Endothelial cell of umbilical vein (primary cell): ENCODE measurements at regions of chr1 and their contacts with region 1.

Region 1: GRCh38 chr1:45686317-45687013 is at the start of gene GPBP1L1:
- DNase-seq: peak; percentile 97
- H3K4me3 ChIP-seq: peak within 1 kb of the TSS; percentile 62 to 99 (median 93)
- H3K27ac ChIP-seq: peak within 1 kb of the TSS; percentile 80
- H3K4me1 ChIP-seq: peaks cover 22% of the 10 kb centered on the region
- H3K27me3 ChIP-seq: no peaks in the 10 kb centered on the region
- CTCF ChIP-seq: no peak
- POLR2A ChIP-seq: peak; percentile 90
- total RNA-seq, gene GPBP1L1: 88.8 and 89.7 TPM in 2 replicates

Region 2: DNA sequence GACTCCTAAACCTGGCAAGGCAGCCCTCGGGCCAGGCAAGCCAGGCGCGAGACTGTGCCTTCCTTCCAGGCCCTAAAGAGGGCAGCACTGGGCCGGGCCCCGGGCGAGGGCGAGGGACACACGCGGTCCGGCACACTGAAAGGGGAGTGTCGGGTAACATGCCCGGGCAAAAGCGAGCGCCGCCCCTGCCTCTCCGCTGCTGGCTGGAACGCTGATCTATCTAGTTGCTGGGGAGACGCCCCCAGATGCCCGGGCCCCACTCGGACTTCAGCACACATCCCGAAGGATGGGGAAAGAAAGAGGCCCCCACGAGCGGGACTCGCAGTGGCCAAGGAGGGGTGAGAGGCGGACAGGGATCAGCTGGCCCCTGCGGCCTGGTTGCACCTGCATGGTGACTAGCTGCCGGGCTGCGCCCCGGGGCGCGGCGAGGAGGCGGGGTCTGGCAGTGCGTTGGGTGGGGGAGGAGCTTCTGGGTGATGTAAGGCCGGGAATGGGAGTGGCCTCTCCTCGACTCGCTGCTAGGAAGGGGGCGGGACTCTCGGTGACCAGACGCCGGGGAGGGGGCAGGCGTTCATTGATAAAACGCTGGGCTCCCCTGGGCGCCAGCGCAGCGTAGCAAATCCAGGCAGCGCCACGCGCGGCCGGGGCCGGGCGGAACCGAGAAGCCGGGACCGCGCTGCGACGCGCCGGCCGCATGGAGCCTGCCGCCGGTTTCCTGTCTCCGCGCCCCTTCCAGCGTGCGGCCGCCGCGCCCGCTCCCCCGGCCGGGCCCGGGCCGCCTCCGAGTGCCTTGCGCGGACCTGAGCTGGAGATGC is 886.5 kb before region 1 on chr1 and contains the start of gene PLK3:
- CTCF ChIA-PET with region 1: no interaction called
- POLR2A ChIA-PET with region 1: no interaction called
- dilution Hi-C with region 1: no loop called
- intact Hi-C with region 1: loop called (anchors 10 kb)
- DNase-seq: peak; percentile 98
- H3K4me3 ChIP-seq: peak within 1 kb of the TSS; percentile 68 to 75 (median 69)
- H3K27ac ChIP-seq: peak within 1 kb of the TSS; percentile 87
- H3K4me1 ChIP-seq: peaks cover 22% of the 10 kb centered on the region
- H3K27me3 ChIP-seq: no peaks in the 10 kb centered on the region
- CTCF ChIP-seq: peak; percentile 93 to 96
- POLR2A ChIP-seq: peak; percentile 100
- total RNA-seq, gene PLK3: 55.0 and 60.0 TPM in 2 replicates

Region 3: DNA sequence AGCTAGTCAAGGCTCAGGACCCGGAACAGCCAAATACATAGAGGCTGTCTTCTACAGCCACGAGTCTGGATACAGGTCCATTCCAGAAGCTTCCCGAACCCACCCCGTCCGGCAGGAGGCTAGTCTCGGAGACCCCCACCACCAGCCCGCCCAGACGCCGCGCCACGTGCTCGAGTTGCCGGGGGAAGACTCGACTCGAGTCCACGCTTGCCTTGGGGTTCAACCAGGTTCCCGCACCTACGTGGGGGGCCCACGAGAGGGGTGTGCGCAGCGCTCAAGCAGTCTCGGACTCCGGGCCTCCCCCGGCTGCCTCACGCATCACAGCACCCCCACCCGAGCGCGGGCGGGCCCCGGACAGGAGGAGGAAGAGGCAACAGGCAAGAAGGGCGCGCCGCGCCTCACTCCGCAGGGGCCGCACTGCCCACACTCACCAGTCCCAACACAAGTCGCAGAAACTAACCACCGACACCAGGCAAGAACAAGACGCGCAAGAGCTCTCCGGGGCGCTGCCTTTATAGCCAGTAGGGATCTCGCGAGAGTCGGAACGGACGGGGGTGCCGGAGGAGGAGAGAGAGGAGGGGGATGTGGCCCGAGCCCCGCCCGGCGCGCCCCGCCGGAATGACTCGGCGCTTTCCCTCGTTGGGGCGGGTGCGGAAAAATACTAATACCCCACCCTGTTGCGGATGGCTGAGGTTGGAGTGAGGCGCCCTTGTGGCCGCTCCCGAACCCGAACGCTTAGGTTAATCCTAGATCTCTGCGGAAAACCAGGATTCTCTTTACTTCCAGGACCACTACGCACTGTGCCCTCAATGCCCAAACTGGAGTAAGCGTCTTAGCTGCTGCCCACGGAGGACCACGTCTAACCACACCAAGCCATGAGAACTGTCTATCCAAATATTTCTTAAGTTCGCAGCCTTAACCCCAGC is 164.8 kb before region 1 on chr1 and contains the start of gene PRDX1:
- CTCF ChIA-PET with region 1: no interaction called
- POLR2A ChIA-PET with region 1: interaction called, 9 read pairs
- dilution Hi-C with region 1: no loop called
- intact Hi-C with region 1: loop called (anchors 1 kb)
- DNase-seq: peak; percentile 96
- H3K4me3 ChIP-seq: peak within 1 kb of the TSS; percentile 79 to 86 (median 80)
- H3K27ac ChIP-seq: peak within 1 kb of the TSS; percentile 87
- H3K4me1 ChIP-seq: peaks cover 19% of the 10 kb centered on the region
- H3K27me3 ChIP-seq: no peaks in the 10 kb centered on the region
- CTCF ChIP-seq: no peak
- POLR2A ChIP-seq: peak; percentile 100
- total RNA-seq, gene PRDX1: 681 and 685 TPM in 2 replicates

Region 4: DNA sequence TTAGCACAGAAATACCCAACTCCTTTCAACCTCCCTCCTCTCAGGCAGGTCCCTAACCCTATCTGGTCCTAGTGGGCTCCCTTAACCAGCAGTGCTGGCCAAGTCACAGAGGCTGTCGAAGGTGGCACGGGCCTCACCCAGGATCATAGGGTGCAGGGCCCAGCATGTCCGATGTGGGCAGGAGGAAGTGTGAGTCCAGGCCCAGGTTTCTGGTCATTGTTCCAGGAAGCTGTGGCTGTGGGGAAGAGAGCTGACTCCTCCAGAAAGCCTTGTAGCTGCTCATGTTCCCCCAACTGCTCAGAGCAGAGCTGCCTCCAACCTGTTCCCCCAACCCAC is 65.0 kb before region 1 on chr1:
- CTCF ChIA-PET with region 1: no interaction called
- POLR2A ChIA-PET with region 1: no interaction called
- dilution Hi-C with region 1: no loop called
- intact Hi-C with region 1: loop called (anchors 5 kb)
- DNase-seq: peak; percentile 33
- H3K4me3 ChIP-seq: no peak overlapping the region
- H3K27ac ChIP-seq: no peak overlapping the region
- H3K4me1 ChIP-seq: peaks cover 54% of the 10 kb centered on the region
- H3K27me3 ChIP-seq: no peaks in the 10 kb centered on the region
- CTCF ChIP-seq: no peak
- POLR2A ChIP-seq: no peak

Region 5: GRCh38 chr1:45803301-45803780 is 116.9 kb after region 1 on chr1 and contains the start of gene MAST2:
- CTCF ChIA-PET with region 1: interaction called, 4 read pairs
- POLR2A ChIA-PET with region 1: interaction called, 3 read pairs
- dilution Hi-C with region 1: no loop called
- intact Hi-C with region 1: loop called (anchors 1 kb)
- DNase-seq: peak; percentile 88
- H3K4me3 ChIP-seq: peak within 1 kb of the TSS; percentile 78 to 98 (median 82)
- H3K27ac ChIP-seq: peak within 1 kb of the TSS; percentile 93
- H3K4me1 ChIP-seq: peaks cover 24% of the 10 kb centered on the region
- H3K27me3 ChIP-seq: no peaks in the 10 kb centered on the region
- CTCF ChIP-seq: no peak
- POLR2A ChIP-seq: peak; percentile 50
- total RNA-seq, gene MAST2: 33.8 and 41.2 TPM in 2 replicates

Region 6: DNA sequence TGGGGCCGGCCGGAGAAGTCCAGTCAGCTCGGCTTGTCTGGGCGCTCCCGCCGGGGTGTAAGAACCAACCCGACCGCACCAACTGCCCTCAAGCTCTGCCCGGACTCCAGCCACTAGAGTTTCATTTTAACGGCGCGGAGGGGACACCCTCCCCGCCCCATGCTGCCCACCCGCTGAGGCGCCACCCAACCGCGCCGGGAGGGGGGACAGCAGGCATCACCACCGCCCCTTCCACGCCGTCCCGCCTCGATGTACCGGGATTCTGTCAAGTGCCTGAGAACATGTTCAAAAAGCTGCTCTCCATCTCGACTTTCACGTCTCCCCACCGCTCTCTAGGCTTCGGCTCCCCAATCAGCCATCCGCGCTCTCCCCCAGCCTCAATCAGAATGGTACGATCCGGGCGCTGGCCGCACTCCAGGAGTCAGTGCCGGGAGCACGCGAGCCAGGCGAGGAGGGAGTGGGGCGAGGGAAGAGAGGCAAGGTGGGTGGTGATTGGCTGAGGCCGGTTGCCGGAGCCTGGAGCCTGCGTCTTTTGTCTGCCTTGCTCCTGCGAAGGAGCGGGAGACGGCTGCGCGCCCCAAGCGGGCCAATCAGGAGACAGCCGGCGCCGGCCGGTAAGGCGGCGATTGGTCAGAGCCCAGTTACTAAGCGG is 446.2 kb after region 1 on chr1 and contains the start of gene PIK3R3:
- CTCF ChIA-PET with region 1: no interaction called
- POLR2A ChIA-PET with region 1: no interaction called
- dilution Hi-C with region 1: no loop called
- intact Hi-C with region 1: loop called (anchors 5 kb)
- DNase-seq: peak; percentile 99
- H3K4me3 ChIP-seq: peak within 1 kb of the TSS; percentile 79 to 99 (median 92)
- H3K27ac ChIP-seq: peak within 1 kb of the TSS; percentile 86
- H3K4me1 ChIP-seq: peaks cover 24% of the 10 kb centered on the region
- H3K27me3 ChIP-seq: no peaks in the 10 kb centered on the region
- CTCF ChIP-seq: no peak
- POLR2A ChIP-seq: peak; percentile 99
- total RNA-seq, gene PIK3R3: 14.3 and 14.6 TPM in 2 replicates

Region 7: DNA sequence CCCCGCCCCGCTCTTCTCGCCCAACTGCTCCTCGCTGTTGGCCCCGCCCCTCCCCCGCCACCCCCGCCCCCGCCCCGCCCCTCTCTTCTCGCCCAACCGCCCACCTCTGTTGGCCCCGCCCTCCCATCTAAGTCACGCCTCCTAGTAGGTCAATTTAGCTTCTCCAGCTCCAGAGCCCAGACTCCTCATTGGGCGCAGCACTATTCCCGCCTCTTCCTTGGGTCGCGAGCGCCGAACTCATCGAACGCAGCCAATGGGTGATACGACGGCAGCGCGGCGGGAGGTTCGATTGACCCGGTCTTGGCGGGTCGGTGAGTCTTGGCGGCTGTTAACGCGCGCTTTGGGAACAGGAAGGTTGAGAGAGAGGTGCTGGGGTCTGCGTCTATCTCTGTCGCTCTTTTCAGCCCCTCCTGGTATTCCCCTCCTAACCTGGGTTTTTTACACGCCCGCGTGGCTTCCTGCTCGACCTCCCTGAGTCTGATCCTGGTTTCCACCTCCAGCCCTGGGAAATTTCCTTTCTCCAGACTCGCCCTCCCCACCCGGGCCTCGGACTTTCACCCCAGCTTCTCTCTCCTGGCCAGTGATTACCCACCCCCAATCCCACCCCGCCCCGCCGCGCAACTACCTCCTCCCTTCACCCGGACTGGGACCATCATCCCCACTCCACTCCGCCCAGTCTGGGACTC is 561.1 kb after region 1 on chr1 and contains the start of gene RAD54L:
- CTCF ChIA-PET with region 1: no interaction called
- POLR2A ChIA-PET with region 1: no interaction called
- dilution Hi-C with region 1: no loop called
- intact Hi-C with region 1: loop called (anchors 1 kb)
- DNase-seq: peak; percentile 97
- H3K4me3 ChIP-seq: peak within 1 kb of the TSS; percentile 75 to 92 (median 82)
- H3K27ac ChIP-seq: peak within 1 kb of the TSS; percentile 48
- H3K4me1 ChIP-seq: peaks cover 20% of the 10 kb centered on the region
- H3K27me3 ChIP-seq: no peaks in the 10 kb centered on the region
- CTCF ChIP-seq: no peak
- POLR2A ChIP-seq: peak; percentile 42
- total RNA-seq, gene RAD54L: 18.9 and 19.7 TPM in 2 replicates